Endothelial cell of umbilical vein (primary cell): ENCODE measurements at regions of chr15 and their contacts with region 1.

Region 1: DNA sequence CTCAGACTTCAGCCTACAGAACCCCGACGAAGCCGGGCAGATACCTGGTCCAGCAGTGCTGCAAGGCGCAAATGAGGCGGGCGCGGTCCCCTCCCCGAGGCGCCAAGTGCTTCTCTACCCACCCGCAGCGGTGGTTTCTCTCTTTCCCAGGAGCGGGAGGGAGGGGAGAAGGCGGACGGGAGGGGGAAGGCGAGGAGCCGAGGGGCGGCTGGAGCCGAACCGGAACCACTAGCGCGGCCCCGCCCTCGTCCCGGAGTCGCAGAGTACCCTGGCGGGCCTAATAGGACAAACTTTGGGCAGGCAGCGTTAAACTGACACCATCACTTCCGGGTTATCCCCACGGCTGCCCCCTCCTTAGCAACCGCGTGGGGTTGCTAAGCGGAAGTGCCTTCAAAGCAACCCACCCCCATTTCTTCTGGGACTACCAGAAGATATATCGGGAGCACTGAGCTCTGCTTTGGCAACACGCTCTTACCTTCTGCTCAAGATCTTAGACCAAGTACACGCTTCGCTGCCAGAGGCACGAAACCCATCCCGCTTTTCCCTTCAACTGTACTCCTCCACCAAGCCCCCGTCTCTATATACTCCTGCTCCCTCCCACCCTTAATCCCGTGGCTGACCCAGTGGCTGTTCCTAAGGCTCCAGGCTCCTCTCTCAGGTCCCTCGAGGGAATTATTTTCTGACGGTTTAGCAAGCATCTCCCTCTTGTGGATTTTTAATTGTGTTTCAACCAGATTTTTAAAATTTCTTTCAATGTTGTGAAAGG is at the start of gene CSNK1G1:
- DNase-seq: peak; percentile 98
- H3K4me3 ChIP-seq: peak within 1 kb of the TSS; percentile 78 to 94 (median 89)
- H3K27ac ChIP-seq: peak within 1 kb of the TSS; percentile 45
- H3K4me1 ChIP-seq: peaks cover 21% of the 10 kb centered on the region
- H3K27me3 ChIP-seq: no peaks in the 10 kb centered on the region
- CTCF ChIP-seq: peak; percentile 20 to 24
- POLR2A ChIP-seq: peak; percentile 77
- total RNA-seq, gene CSNK1G1: 25.9 and 31.7 TPM in 2 replicates

Region 2: DNA sequence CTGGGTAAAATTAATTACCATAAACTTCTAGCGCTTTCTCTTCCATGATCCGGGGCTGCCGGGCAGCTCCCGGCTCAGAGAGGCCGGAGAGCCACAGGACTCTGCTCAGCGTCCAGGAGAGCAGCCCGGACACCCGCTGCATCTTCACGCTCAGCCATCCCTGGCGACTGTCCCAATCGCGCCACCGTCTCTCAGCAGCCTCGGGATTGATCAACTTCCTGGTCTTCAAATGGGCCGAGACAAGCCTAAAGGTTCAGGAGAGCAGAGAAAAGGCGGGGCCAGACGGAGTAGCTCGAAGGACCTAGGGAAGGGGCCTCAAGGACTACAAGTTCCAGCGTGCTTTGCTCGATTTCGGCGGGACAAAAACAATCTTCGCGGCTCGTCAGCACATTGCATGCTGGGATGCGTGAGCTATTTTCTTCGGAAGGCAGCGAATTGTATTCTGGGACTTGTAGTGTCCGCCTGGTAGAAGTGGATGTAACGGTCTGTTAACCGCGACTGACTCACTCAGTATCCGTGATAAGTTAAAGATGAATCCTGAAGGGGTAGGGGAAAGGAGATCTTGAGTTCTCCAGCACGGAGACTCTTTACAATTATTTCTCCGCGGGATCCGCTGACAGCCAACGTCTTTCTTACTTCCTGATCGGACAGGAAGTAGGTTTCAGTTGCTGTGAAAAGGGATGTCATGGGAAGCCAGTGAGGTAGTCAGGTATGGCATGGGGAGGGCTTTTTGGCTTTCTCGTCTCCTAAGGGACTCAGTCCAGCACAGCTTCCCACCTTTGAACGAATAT is 262.3 kb before region 1 on chr15 and contains the start of gene CIAO2A:
- CTCF ChIA-PET with region 1: no interaction called
- POLR2A ChIA-PET with region 1: no interaction called
- dilution Hi-C with region 1: no loop called
- intact Hi-C with region 1: loop called (anchors 5 kb)
- DNase-seq: peak; percentile 99
- H3K4me3 ChIP-seq: peak within 1 kb of the TSS; percentile 49 to 87 (median 66)
- H3K27ac ChIP-seq: peak within 1 kb of the TSS; percentile 86
- H3K4me1 ChIP-seq: peaks cover 35% of the 10 kb centered on the region
- H3K27me3 ChIP-seq: no peaks in the 10 kb centered on the region
- CTCF ChIP-seq: no peak
- POLR2A ChIP-seq: peak; percentile 37
- total RNA-seq, gene CIAO2A: 55.3 and 59.2 TPM in 2 replicates

Region 3: GRCh38 chr15:64162870-64163658 is 193.1 kb before region 1 on chr15 and contains the start of gene PPIB:
- CTCF ChIA-PET with region 1: interaction called, 13 read pairs
- POLR2A ChIA-PET with region 1: no interaction called
- dilution Hi-C with region 1: no loop called
- intact Hi-C with region 1: loop called (anchors 1 kb)
- DNase-seq: peak; percentile 98
- H3K4me3 ChIP-seq: peak within 1 kb of the TSS; percentile 77 to 96 (median 94)
- H3K27ac ChIP-seq: peak within 1 kb of the TSS; percentile 70
- H3K4me1 ChIP-seq: peaks cover 16% of the 10 kb centered on the region
- H3K27me3 ChIP-seq: no peaks in the 10 kb centered on the region
- CTCF ChIP-seq: peak; percentile 39 to 59
- POLR2A ChIP-seq: peak; percentile 95
- total RNA-seq, gene PPIB: 818 and 840 TPM in 2 replicates

Region 4: GRCh38 chr15:64209680-64210334 is 146.3 kb before region 1 on chr15:
- CTCF ChIA-PET with region 1: interaction called, 44 read pairs
- POLR2A ChIA-PET with region 1: no interaction called
- dilution Hi-C with region 1: no loop called
- intact Hi-C with region 1: loop called (anchors 1 kb)
- DNase-seq: peak; percentile 77
- H3K4me3 ChIP-seq: no peak overlapping the region
- H3K27ac ChIP-seq: no peak overlapping the region
- H3K4me1 ChIP-seq: peaks cover 2% of the 10 kb centered on the region
- H3K27me3 ChIP-seq: no peaks in the 10 kb centered on the region
- CTCF ChIP-seq: peak; percentile 20 to 31
- POLR2A ChIP-seq: no peak

Region 5: GRCh38 chr15:64247906-64248541 is 108.1 kb before region 1 on chr15:
- CTCF ChIA-PET with region 1: interaction called, 6 read pairs
- POLR2A ChIA-PET with region 1: no interaction called
- dilution Hi-C with region 1: no loop called
- intact Hi-C with region 1: loop called (anchors 1 kb)
- DNase-seq: peak; percentile 95
- H3K4me3 ChIP-seq: no peak overlapping the region
- H3K27ac ChIP-seq: peak overlapping the region; percentile 91
- H3K4me1 ChIP-seq: peaks cover 15% of the 10 kb centered on the region
- H3K27me3 ChIP-seq: no peaks in the 10 kb centered on the region
- CTCF ChIP-seq: no peak
- POLR2A ChIP-seq: no peak

Region 6: DNA sequence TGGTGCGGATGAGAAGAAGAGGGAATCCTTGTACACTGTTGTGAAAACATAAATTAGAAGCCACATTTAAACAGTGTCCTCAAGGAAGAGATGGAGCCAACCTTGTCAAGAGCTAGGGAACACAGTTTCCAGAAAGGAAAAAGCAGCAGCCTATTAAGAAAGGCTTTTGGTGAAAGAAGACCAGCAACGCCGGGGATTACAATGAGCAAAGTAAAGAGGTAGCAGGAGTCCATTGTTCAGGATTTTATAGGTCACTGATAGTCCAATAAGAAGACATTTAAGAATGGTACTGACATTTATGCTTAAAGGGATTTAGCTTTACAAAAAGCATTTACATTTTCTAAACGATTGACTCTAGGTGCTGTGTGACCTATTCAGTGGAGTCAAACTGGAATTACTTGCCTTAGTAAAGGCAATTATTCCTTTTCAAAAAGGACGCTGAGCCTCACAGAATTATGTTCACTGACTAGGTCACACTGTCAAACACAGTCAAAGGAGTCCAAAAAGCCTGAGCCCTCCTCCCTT is 40.9 kb before region 1 on chr15:
- CTCF ChIA-PET with region 1: no interaction called
- POLR2A ChIA-PET with region 1: no interaction called
- dilution Hi-C with region 1: no loop called
- intact Hi-C with region 1: loop called (anchors 5 kb)
- DNase-seq: no peak
- H3K4me3 ChIP-seq: no peak overlapping the region
- H3K27ac ChIP-seq: no peak overlapping the region
- H3K4me1 ChIP-seq: no peaks in the 10 kb centered on the region
- H3K27me3 ChIP-seq: no peaks in the 10 kb centered on the region
- CTCF ChIP-seq: no peak
- POLR2A ChIP-seq: no peak

Region 7: GRCh38 chr15:64387562-64388168 is 31.5 kb after region 1 on chr15 and contains the start of gene TRIP4:
- CTCF ChIA-PET with region 1: interaction called, 3 read pairs
- POLR2A ChIA-PET with region 1: no interaction called
- dilution Hi-C with region 1: no loop called
- intact Hi-C with region 1: loop called (anchors 1 kb)
- DNase-seq: peak; percentile 98
- H3K4me3 ChIP-seq: peak within 1 kb of the TSS; percentile 41 to 92 (median 89)
- H3K27ac ChIP-seq: peak within 1 kb of the TSS; percentile 56
- H3K4me1 ChIP-seq: peaks cover 7% of the 10 kb centered on the region
- H3K27me3 ChIP-seq: no peaks in the 10 kb centered on the region
- CTCF ChIP-seq: no peak
- POLR2A ChIP-seq: peak; percentile 94
- total RNA-seq, gene TRIP4: 29.8 and 31.1 TPM in 2 replicates